H1 (cell line): ENCODE measurements at regions of chr22 and their contacts with region 1.

Region 1: GRCh38 chr22:22110548-22111266 is 128.1 kb upstream of the TOP3B start:
- DNase-seq: peak in 1 of 2 experiments; percentile 62
- H3K4me3 ChIP-seq: no peak overlapping the region
- H3K27ac ChIP-seq: no peak overlapping the region
- H3K4me1 ChIP-seq: peaks cover 0 to 2% (median 0%) of the 10 kb centered on the region in 4 experiments; a peak in 3 of 7 replicates
- H3K27me3 ChIP-seq: peaks cover 34 to 63% (median 58%) of the 10 kb centered on the region in 4 experiments
- CTCF ChIP-seq: peak; percentile 64 to 79 (median 78)
- EP300 ChIP-seq: no peak
- POLR2A ChIP-seq: no peak
- RAD21 ChIP-seq: peak; percentile 54 to 60

Region 2: DNA sequence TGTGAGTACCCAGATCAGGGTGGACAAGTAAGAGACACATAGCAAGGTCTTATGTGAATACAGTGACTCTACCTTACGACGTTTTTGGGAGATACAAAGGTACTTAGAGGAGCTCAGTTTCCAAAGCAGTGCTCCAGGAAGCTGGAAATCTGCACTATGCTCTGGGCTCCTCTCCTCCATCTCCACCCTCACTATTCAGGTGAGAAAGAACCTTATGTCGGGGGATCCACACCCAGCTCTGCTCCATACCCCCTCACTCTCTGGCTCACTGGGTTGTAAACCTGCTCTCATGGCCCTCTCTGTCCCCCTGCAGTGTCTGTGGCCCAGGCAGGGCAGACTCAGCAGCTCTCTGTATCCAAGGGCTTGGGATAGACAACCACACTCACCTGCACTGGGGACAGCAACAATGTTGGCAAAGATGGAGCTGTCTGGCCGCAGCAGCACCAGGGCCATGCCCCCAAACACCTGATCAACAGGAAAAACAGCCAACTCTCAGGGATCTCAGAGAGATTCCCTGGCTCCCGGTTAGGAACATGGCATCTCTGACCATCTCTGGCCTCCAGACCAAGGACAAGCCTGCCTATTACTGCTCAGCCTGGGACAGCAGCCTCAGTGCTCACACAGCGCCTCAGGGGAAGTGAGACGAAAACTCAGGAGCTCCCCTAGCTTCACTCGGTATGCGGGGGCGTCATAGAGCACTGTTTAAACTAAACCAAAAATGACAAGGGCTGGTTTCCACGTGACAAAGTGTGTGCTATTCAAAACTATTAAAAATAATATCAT is 67.2 kb before region 1 on chr22:
- CTCF ChIA-PET with region 1: interaction called, 10 read pairs
- POLR2A ChIA-PET with region 1: no interaction called
- DNase-seq: no peak
- H3K4me3 ChIP-seq: no peak overlapping the region
- H3K27ac ChIP-seq: no peak overlapping the region
- H3K4me1 ChIP-seq: no peaks in the 10 kb centered on the region
- H3K27me3 ChIP-seq: peaks cover 64 to 94% (median 85%) of the 10 kb centered on the region in 4 experiments
- CTCF ChIP-seq: no peak
- EP300 ChIP-seq: no peak
- POLR2A ChIP-seq: no peak
- RAD21 ChIP-seq: no peak

Region 3: DNA sequence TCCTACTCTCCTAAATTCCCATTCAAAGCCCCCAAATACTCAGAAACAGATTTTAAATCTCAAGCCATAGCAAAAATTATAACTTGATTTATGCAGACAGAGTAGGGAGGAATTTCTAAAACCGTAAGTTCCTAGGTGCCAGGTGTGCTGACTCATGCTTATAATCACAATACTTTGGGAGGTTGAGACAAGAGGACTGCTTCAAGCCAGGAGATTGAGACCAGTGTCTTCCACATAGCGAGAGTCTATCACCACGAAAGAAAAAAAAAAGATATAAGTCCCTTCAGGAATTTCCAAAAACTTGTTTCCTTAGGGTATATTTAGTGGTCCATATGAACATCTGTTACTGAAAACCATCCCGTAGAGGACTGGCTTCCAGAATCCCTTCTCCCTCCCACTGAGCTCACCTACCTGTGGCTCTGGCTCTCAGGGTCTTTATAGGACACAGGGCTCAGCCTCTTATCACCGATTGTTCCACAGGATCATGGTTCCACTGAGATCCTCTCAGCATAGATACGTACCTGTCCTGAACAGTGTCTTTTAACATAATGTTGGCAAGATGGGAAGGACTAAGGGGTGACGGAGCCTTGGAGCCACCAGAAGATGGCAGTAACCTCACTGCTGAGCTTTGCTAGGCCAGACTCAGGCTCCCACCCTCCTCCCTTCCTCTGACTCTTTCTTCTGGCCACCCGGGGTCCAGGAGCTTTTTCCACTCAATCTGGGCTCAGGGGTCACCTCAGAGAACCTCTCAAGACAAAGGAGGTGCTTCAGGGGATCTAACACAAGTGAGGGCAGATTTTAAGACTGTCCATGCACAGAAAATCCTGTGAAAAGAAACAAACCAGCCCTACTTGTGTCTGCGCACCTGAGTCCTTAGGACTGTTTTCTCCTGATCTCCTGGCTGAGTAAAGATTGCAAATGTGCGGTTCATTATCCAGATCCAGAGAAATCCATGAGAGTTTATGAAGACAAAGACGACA is 10.6 kb before region 1 on chr22:
- CTCF ChIA-PET with region 1: interaction called, 47 read pairs
- POLR2A ChIA-PET with region 1: no interaction called
- DNase-seq: no peak
- H3K4me3 ChIP-seq: no peak overlapping the region
- H3K27ac ChIP-seq: no peak overlapping the region
- H3K4me1 ChIP-seq: no peaks in the 10 kb centered on the region
- H3K27me3 ChIP-seq: peaks cover 67 to 90% (median 83%) of the 10 kb centered on the region in 4 experiments
- CTCF ChIP-seq: peak; percentile 50 to 79 (median 71); a peak in 3 of 4 replicates
- EP300 ChIP-seq: no peak
- POLR2A ChIP-seq: no peak
- RAD21 ChIP-seq: peak; percentile 54 to 58

Region 4: DNA sequence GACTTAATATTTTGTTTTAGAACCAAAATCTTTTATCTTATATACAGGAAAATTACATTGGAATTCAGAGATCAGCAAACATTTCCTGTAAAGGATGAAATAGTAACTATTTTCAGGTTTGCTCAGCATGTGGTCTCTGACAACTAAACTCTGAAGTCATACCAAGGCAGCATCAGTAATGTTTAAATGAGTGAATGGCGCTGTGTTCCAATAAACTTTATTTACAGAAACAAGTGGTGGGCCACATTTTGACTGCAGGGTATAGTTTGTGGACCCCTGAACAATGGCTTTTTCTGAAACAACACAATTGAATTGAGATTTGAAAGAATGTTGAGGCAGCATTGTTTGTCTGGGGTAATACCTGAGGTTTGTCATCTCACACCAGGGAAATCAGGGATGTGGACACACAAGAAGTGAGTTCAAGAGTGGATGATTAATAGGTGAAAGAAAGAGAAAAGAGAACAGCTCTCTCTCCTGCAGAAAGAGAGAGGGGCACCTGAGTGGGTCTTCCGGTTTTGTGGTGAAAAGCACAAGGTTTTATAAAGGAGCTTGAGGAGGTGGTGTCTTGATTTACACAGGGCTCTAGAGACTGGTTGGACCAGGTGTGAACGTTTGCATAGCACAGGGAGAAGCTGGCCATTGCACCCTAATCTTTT is 20.4 kb after region 1 on chr22:
- CTCF ChIA-PET with region 1: interaction called, 21 read pairs
- POLR2A ChIA-PET with region 1: interaction called, 3 read pairs
- DNase-seq: no peak
- H3K4me3 ChIP-seq: no peak overlapping the region
- H3K27ac ChIP-seq: no peak overlapping the region
- H3K4me1 ChIP-seq: peaks cover 0 to 3% (median under 1%) of the 10 kb centered on the region in 4 experiments; a peak in 2 of 7 replicates
- H3K27me3 ChIP-seq: peaks cover 12 to 40% (median 32%) of the 10 kb centered on the region in 4 experiments
- CTCF ChIP-seq: no peak
- EP300 ChIP-seq: no peak
- POLR2A ChIP-seq: no peak
- RAD21 ChIP-seq: no peak

Region 5: DNA sequence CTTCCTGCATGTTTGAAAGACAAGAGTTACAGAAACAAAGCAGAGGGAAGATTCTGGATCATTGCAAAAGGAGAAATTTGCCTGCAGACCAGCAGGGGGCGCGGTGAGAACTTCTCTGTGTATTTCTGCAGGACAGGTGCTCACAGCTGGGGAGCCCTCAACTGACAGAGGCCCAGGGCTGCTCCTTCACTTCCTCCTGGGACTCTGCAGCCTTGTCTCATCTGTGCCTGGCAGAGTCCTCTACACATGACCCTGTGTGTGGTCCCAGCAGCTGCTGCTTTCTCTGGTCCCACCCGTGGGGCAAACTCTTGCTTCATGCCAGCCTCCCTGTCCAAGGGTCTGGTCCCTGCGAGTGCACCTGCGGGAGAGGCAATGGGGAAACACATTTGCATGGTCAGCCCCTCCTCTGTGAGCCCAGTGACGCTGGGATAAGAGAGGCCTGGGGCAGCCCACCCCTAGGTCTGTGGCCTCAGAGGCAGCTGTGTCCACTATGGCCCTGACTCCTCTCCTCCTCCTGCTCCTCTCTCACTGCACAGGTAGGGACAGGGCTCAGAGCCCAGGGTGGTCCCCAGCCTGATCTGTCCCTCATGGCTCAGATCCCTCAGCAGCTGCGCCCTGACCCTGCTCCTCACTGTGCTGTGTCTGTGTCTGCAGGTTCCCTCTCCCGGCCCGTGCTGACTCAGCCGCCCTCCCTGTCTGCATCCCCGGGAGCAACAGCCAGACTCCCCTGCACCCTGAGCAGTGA is 90.7 kb after region 1 on chr22:
- CTCF ChIA-PET with region 1: interaction called, 11 read pairs
- POLR2A ChIA-PET with region 1: no interaction called
- DNase-seq: peak; percentile 19 to 87
- H3K4me3 ChIP-seq: no peak overlapping the region
- H3K27ac ChIP-seq: no peak overlapping the region
- H3K4me1 ChIP-seq: no peaks in the 10 kb centered on the region
- H3K27me3 ChIP-seq: peaks cover 88 to 99% (median 97%) of the 10 kb centered on the region in 4 experiments
- CTCF ChIP-seq: peak; percentile 67 to 86 (median 72)
- EP300 ChIP-seq: no peak
- POLR2A ChIP-seq: no peak
- RAD21 ChIP-seq: peak; percentile 30 to 40; a peak in 2 of 4 replicates